ENCODE measurements at regions of chr10 and their contacts with region 1.

Region 1: DNA sequence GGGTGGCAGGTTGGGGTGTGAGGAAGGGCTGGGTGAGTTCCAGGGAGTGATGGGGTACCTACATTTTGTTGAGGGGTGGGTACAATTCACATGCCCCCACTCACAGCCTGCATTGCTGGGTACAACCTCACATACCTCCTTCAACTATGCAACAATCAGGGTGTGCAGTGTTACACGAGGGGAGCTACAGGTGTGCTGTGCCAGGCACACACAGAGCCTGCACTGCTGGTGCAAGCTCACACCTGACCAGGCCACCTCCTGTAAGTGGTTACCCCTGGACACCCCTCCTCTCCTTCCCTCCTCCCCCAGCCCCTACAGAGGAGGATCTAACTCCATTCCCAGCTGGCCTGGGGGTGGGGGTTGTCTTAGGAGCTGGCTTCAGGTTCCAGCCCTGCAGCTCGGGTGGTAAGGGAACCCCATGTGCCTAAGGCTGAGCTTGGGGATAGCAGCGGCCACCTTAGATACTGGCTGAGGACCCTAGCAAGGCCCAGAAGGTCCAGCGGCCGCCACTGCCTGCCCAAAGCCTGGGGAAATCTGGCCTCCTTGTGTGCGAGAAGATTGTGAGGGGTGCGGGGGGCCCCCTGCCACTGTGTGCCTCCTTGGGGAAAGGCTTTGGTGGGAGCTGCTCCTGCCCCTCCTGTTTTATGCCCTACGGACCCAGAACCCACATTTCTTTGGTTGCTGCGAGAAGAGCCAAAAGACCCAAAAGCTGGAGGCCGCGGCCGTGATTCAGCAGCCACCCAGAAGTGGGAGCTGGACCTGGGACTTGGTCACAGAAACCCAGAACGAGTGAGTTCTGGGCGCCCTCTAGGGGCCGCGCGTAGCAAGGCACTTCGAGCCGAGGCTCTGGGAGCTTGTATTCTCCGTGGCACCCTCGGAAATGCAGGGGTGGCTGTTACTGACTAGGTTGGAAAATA is 10.8 kb downstream of the TLX1 start:
- DNase-seq: peak; percentile 4
- ATAC-seq: peak; percentile 97
- H3K4me3 ChIP-seq: no peak overlapping the region
- H3K27ac ChIP-seq: no peak overlapping the region
- H3K4me1 ChIP-seq: no peaks in the 10 kb centered on the region
- H3K27me3 ChIP-seq: peaks cover 24 to 25% of the 10 kb centered on the region in 2 experiments
- CTCF ChIP-seq: peak; percentile 85 to 97 (median 97)
- EP300 ChIP-seq: no peak
- POLR2A ChIP-seq: no peak
- RAD21 ChIP-seq: peak; percentile 80

Region 2: GRCh38 chr10:101042667-101043355 is 99.1 kb before region 1 on chr10:
- CTCF ChIA-PET with region 1: interaction called, 90 read pairs
- POLR2A ChIA-PET with region 1: no interaction called
- RAD21 ChIA-PET with region 1: interaction called, 20 read pairs
- SMC1A ChIA-PET with region 1: interaction called, 21 read pairs
- in situ Hi-C with region 1: loop called (anchors 5 kb)
- intact Hi-C with region 1: loop called (anchors 1 kb)
- DNase-seq: peak; percentile 83
- ATAC-seq: peak; percentile 96
- H3K4me3 ChIP-seq: peak overlapping the region; percentile 63
- H3K27ac ChIP-seq: peak overlapping the region; percentile 7; the same call in 1 of the 2 replicates
- H3K4me1 ChIP-seq: peaks cover 5% of the 10 kb centered on the region; the same call in 1 of the 2 replicates
- H3K27me3 ChIP-seq: no peaks in the 10 kb centered on the region; a peak in 1 of 4 replicates
- CTCF ChIP-seq: no peak
- EP300 ChIP-seq: no peak
- POLR2A ChIP-seq: peak; percentile 87
- RAD21 ChIP-seq: no peak

Region 3: DNA sequence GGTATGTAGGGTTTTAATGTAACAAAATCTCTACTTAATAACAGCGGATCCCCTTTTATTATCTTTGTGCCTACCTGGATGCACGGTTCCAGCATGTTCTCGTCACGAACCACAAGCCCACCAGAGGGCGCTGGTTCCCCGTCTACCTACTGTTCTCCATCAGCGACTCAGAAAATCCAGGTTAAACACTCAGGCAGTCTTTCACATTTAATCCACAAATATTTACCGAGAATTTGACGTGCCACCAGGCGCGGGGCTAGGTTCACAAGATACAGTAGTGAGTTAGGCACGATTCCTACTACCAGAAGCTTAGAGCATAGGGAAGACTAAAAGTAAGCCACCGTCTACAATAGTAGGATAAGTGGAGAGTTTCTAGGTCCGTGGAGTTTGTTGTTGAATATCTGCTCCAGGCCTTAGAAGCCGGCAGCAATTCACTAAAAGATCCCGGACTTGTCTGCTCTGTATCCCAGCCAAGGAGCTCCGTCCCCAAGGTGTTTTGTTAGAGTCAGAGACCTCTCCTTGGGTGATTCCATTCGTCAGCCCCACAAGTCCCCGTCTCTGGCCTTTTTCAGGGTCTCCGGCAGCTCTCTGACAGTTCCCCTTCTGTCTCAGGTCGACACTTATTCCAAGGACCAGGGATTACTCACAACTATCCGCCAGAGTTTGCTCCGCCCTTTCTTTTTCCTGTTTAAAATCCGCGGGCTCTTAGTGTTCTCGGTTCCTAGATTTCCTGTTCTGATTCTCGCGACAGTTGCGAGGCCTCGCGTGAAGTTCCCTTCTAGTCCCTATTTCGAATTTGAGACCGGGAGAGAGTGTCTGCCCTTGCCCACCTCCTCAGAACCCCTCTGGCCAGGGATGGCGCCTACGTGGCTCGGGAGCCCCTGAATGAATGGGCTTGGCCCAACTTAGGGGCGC is 81.6 kb before region 1 on chr10:
- CTCF ChIA-PET with region 1: interaction called, 37 read pairs
- POLR2A ChIA-PET with region 1: interaction called, 9 read pairs
- RAD21 ChIA-PET with region 1: interaction called, 32 read pairs
- SMC1A ChIA-PET with region 1: interaction called, 15 read pairs
- in situ Hi-C with region 1: no loop called
- intact Hi-C with region 1: no loop called
- DNase-seq: peak; percentile 81
- ATAC-seq: peak; percentile 54
- H3K4me3 ChIP-seq: peak overlapping the region; percentile 95
- H3K27ac ChIP-seq: peak overlapping the region; percentile 98
- H3K4me1 ChIP-seq: peaks cover 31% of the 10 kb centered on the region
- H3K27me3 ChIP-seq: peaks cover 0 to 3% of the 10 kb centered on the region in 2 experiments; a peak in 1 of 4 replicates
- CTCF ChIP-seq: peak; percentile 87 to 92 (median 92)
- EP300 ChIP-seq: no peak
- POLR2A ChIP-seq: no peak; the same call in 1 of the 2 replicates
- RAD21 ChIP-seq: peak; percentile 83

Region 4: GRCh38 chr10:101075775-101076174 is 66.1 kb before region 1 on chr10:
- CTCF ChIA-PET with region 1: interaction called, 10 read pairs
- POLR2A ChIA-PET with region 1: no interaction called
- RAD21 ChIA-PET with region 1: interaction called, 4 read pairs
- SMC1A ChIA-PET with region 1: interaction called, 3 read pairs
- in situ Hi-C with region 1: no loop called
- intact Hi-C with region 1: no loop called
- DNase-seq: no peak
- ATAC-seq: no peak
- H3K4me3 ChIP-seq: no peak overlapping the region
- H3K27ac ChIP-seq: no peak overlapping the region
- H3K4me1 ChIP-seq: peaks cover 15% of the 10 kb centered on the region
- H3K27me3 ChIP-seq: peaks cover 0 to 4% of the 10 kb centered on the region in 2 experiments; a peak in 3 of 4 replicates
- CTCF ChIP-seq: no peak
- EP300 ChIP-seq: no peak
- POLR2A ChIP-seq: no peak
- RAD21 ChIP-seq: no peak

Region 5: DNA sequence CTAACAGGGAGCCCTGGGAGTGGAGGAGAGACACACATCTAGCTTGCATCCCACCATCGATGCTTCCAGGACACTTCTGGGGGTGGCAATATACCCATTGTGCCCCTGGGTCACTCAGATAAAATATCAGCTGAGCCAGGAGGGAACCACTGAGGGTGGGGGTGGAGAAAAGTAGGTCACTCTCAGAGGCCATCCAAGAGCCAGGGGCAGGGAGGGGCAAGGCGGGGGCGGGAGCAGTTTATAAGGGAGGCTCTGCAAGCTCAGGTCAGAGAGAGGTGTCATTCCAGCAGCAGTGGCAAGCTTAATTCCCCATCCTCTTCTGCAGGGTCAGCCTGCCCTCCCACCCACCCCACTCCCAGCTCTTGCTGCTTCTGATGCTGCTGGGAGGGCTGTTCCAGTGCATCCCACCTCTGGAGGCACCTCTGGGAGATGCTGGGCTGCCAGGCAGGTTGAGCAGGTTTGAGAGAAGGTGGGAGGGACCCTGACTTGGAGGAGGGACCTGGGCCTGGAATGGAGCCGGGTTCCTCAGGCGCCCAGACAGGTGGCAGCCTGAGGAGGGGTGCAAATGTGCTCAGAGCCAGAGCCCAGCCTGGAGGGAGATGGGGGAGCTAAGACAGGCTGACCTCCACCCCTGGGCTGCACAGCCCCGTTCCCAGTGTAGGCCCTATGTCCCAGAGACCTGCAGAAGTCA is 30.9 kb before region 1 on chr10:
- CTCF ChIA-PET with region 1: interaction called, 14 read pairs
- POLR2A ChIA-PET with region 1: no interaction called
- RAD21 ChIA-PET with region 1: interaction called, 3 read pairs
- SMC1A ChIA-PET with region 1: no interaction called
- in situ Hi-C with region 1: no loop called
- intact Hi-C with region 1: no loop called
- DNase-seq: no peak
- ATAC-seq: no peak
- H3K4me3 ChIP-seq: no peak overlapping the region
- H3K27ac ChIP-seq: no peak overlapping the region
- H3K4me1 ChIP-seq: no peaks in the 10 kb centered on the region
- H3K27me3 ChIP-seq: peaks cover 0 to 2% of the 10 kb centered on the region in 2 experiments; a peak in 2 of 4 replicates
- CTCF ChIP-seq: no peak
- EP300 ChIP-seq: no peak
- POLR2A ChIP-seq: no peak
- RAD21 ChIP-seq: no peak

Region 6: DNA sequence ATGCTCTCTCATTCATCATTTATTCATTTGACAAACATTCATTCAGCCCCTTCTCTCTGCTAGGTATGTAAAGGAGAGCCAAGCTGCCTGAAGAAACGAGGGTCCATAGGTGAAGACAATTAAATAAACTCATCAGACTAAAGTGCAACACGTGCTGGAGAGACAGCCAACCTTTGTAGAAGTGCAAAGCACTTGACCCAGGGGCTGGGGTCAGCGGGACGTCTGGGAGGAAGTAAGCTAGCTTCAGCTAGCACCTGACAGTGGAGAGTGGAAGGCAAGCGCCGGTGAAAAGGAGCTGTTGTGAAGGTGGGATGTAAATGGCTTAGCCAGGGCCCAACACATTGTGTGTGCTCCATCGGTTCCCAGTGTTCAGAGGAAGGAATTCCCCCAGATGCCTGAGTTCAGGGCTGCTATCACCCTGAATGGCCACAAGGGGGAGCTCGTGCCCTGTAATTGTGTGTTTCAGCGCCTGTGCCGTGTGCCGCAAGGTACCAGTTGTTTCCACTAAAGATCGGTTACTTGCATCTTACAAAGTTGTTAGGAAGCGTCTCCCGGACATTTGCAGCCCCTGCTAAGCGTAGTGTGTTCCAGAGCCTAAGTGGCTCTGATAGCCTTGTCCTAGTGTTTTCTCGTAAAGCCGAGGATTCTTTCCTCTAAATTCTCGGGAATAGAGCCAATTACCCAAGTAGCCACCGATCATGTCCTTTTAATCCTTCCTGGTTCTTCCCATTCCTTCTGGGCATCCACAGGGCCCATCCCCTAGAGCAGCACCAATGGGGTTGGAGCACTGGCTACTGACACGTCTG is 19.8 kb after region 1 on chr10:
- CTCF ChIA-PET with region 1: interaction called, 25 read pairs
- POLR2A ChIA-PET with region 1: no interaction called
- RAD21 ChIA-PET with region 1: no interaction called
- SMC1A ChIA-PET with region 1: no interaction called
- in situ Hi-C with region 1: no loop called
- intact Hi-C with region 1: no loop called
- DNase-seq: peak; percentile 12
- ATAC-seq: peak; percentile 96
- H3K4me3 ChIP-seq: no peak overlapping the region
- H3K27ac ChIP-seq: no peak overlapping the region
- H3K4me1 ChIP-seq: peaks cover 6% of the 10 kb centered on the region
- H3K27me3 ChIP-seq: peaks cover 1 to 2% of the 10 kb centered on the region in 2 experiments; a peak in 3 of 4 replicates
- CTCF ChIP-seq: peak; percentile 94 to 97 (median 95); a peak in 5 of 6 replicates
- EP300 ChIP-seq: no peak
- POLR2A ChIP-seq: no peak
- RAD21 ChIP-seq: peak; percentile 70

Region 7: GRCh38 chr10:101257084-101257483 is 115.2 kb after region 1 on chr10:
- CTCF ChIA-PET with region 1: no interaction called
- POLR2A ChIA-PET with region 1: no interaction called
- RAD21 ChIA-PET with region 1: no interaction called
- SMC1A ChIA-PET with region 1: no interaction called
- in situ Hi-C with region 1: no loop called
- intact Hi-C with region 1: no loop called
- DNase-seq: no peak
- ATAC-seq: no peak
- H3K4me3 ChIP-seq: no peak overlapping the region
- H3K27ac ChIP-seq: no peak overlapping the region
- H3K4me1 ChIP-seq: no peaks in the 10 kb centered on the region
- H3K27me3 ChIP-seq: peaks cover 2 to 3% of the 10 kb centered on the region in 2 experiments; a peak in 3 of 4 replicates
- CTCF ChIP-seq: no peak
- EP300 ChIP-seq: no peak
- POLR2A ChIP-seq: no peak
- RAD21 ChIP-seq: no peak

Region 8: DNA sequence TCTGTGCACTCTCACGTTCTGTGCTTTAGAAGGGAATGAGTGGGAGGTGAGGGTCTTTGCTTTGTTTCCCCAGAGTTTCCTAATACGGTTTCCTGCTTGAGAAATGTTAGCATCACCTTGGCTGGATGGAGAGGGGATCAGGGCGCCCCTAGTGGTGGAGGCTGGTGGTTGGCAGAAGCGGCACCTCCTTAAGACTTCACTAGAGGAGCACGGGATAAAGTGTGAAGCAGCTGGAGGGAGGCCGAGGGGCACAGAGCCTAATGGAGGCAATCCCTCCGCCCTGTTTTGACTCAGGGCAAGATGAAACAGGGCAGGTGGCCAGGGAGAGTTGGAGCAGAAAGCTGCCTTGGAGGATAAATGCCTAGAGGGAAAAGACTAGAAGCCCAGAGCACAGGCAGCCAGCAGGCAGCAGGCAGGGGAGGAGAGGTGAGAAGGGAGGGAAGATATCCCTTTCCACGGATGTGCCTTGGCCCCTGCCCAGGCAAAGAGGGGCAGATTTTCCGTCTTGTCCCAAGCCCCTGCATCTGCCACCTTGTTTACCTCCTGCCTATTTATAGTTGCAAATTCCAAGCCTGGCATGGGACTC is 156.1 kb after region 1 on chr10:
- CTCF ChIA-PET with region 1: no interaction called
- POLR2A ChIA-PET with region 1: no interaction called
- RAD21 ChIA-PET with region 1: no interaction called
- SMC1A ChIA-PET with region 1: no interaction called
- in situ Hi-C with region 1: no loop called
- intact Hi-C with region 1: no loop called
- DNase-seq: no peak
- ATAC-seq: peak; percentile 96
- H3K4me3 ChIP-seq: no peak overlapping the region
- H3K27ac ChIP-seq: no peak overlapping the region
- H3K4me1 ChIP-seq: no peaks in the 10 kb centered on the region
- H3K27me3 ChIP-seq: peaks cover 0 to 3% of the 10 kb centered on the region in 2 experiments; a peak in 2 of 4 replicates
- CTCF ChIP-seq: peak; percentile 77 to 96 (median 96)
- EP300 ChIP-seq: no peak
- POLR2A ChIP-seq: no peak
- RAD21 ChIP-seq: peak; percentile 36; the same call in 1 of the 2 replicates

Region 9: GRCh38 chr10:101353692-101354327 is 211.9 kb after region 1 on chr10 and contains the start of gene BTRC:
- CTCF ChIA-PET with region 1: no interaction called
- POLR2A ChIA-PET with region 1: no interaction called
- RAD21 ChIA-PET with region 1: no interaction called
- SMC1A ChIA-PET with region 1: no interaction called
- in situ Hi-C with region 1: no loop called
- intact Hi-C with region 1: no loop called
- DNase-seq: peak; percentile 98
- ATAC-seq: peak; percentile 98
- H3K4me3 ChIP-seq: peak within 1 kb of the TSS; percentile 82
- H3K27ac ChIP-seq: peak within 1 kb of the TSS; percentile 51
- H3K4me1 ChIP-seq: 0 out of 2 replicates have a peak, but pooled peaks cover 3% of the 10 kb centered on the region
- H3K27me3 ChIP-seq: no peaks in the 10 kb centered on the region
- CTCF ChIP-seq: no peak
- EP300 ChIP-seq: peak in 1 of 2 experiments; percentile 93; a peak in 2 of 4 replicates
- POLR2A ChIP-seq: peak; percentile 79
- RAD21 ChIP-seq: no peak
- polyA plus RNA-seq, gene BTRC: 2.2 to 3.2 TPM